Psoas muscle (tissue), 8 donors: ENCODE measurements at regions of chr11 and their contacts with region 1.

Region 1: DNA sequence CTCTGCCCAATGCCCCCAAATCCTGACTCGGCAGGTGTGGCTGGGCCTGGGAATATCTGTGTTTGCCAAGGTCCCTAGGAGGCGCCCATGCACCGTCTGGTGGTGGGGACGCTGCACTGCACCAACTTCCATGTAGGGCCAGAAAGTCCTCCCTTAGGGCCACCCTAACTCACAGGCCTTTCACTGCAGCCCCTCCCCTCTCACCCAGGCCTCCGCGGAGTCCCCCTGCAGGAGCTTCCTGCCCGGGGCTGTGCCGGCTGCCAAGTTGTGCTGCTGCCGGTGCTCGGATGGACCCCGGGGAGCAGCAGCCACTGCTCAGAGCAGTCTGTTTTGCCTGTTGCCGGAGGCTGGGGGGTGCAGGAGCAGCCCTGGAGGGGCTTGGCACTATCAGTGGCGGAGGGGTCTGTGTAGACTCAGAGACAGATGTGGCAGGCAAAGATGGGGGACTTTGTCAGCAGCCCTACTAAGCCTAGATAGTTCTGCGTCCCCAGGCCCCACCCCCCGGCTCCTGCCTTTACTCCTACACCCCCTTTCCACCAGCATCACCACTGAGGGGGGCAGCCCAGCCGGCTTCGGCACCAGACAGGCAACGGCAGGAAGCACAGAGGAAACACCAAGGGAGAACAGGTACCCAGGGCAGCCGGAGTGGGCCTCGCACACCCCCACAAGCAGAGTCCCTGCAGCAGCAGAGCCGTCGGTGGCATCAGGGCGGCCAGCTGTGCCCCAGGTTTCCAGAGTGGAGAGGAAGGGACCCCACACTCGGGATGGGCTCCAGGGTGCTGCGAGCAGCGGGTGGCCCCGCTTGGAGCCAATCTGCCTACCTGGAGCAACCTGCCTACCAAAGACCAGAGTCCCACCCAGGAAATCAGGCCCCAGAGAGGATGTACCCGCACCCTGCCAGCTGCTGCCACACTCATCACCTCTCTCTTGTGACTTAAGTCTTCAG is 124.3 kb downstream of the TRIM29 start:
- DNase-seq: peak in 1 of 2 donors; percentile 32
- ATAC-seq: peak; percentile 58 to 72 (median 69)
- H3K4me3 ChIP-seq: no peak overlapping the region
- H3K27ac ChIP-seq: no peak overlapping the region
- H3K4me1 ChIP-seq: no peaks in the 10 kb centered on the region
- H3K27me3 ChIP-seq: peaks cover 0 to 67% (median 2%) of the 10 kb centered on the region in 3 donors
- CTCF ChIP-seq: peak; percentile 60

Region 2: DNA sequence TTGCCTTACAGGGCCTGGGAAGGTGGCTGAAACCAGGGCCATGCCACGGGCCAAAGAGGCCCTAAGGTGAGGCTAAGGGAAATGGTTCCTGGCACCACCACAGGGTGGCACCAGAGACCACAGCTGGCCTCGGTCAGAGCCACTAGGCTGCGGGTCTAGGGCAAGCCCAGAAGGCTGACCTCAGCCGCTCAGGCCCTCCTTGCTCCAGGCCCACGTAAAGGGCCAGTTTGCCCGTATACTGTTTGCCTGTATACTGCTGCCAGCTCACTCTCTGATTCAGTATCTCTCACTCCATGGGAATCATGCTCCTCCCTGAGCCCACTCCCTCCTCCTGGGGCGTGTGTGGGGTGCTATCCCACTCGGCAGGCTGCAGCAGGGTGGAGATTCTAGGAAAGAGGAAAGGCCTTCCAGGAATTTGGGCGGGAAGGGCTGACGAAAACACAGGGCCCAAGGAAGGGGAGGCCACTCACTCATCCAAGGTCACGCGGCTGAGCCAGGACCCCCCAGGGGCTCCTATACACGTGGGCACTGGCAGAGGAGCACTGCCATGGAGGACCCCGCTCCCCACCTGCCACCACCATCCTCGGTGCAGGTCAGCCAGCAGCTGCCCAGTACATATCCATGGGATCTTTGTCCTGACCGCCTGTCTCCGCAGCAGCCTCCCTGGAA is 347.0 kb before region 1 on chr11:
- intact Hi-C with region 1: loop called in 1 of 2 experiments (anchors 2 kb)
- DNase-seq: peak; percentile 76 to 88
- ATAC-seq: peak; percentile 95 to 98 (median 96)
- H3K4me3 ChIP-seq: no peak overlapping the region
- H3K27ac ChIP-seq: no peak overlapping the region
- H3K4me1 ChIP-seq: peaks cover 5% of the 10 kb centered on the region
- H3K27me3 ChIP-seq: no peaks in the 10 kb centered on the region
- CTCF ChIP-seq: peak; percentile 96

Region 3: DNA sequence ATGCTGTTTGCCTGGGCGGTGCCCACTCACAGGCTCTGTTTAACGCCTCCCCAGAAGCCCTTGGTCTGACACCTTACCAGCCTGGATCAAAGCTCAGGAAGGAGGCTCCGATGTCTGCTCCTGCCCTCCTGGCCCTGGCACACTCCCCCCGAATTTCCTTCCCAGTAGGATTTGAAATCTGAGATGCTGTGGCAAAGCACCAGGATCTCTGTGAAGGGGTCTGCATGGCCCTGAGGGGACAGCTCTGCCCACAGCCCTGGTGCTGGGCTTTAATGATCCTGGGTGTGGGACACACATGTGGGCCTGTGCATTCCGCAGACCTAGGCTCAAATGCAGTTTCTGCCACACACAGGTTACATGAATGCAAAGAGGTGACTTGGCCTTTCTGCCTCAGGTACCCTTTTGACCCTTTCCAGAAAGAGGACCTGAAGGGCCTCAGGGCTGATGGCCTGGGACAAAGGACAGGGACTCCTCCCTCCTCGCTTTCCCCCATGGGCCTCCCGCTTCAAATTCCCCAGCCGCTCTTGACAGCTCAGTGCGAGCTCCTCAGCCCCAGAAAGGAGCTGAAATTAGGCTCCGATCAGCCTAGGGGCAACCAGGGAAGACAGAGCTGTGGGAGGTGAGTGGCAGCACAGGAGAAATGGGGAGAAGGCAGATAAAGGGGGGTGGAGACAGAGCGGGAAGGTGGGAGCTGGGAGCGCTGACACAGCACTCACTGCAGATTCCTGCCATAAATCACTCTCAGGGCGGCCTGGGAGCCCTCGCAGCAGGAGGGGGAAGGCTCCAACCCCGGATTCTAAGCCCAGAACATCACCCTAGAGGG is 83.0 kb after region 1 on chr11:
- intact Hi-C with region 1: no loop called
- DNase-seq: no peak
- ATAC-seq: no peak
- H3K4me3 ChIP-seq: no peak overlapping the region
- H3K27ac ChIP-seq: no peak overlapping the region
- H3K4me1 ChIP-seq: no peaks in the 10 kb centered on the region
- H3K27me3 ChIP-seq: no peaks in the 10 kb centered on the region
- CTCF ChIP-seq: no peak

Region 4: DNA sequence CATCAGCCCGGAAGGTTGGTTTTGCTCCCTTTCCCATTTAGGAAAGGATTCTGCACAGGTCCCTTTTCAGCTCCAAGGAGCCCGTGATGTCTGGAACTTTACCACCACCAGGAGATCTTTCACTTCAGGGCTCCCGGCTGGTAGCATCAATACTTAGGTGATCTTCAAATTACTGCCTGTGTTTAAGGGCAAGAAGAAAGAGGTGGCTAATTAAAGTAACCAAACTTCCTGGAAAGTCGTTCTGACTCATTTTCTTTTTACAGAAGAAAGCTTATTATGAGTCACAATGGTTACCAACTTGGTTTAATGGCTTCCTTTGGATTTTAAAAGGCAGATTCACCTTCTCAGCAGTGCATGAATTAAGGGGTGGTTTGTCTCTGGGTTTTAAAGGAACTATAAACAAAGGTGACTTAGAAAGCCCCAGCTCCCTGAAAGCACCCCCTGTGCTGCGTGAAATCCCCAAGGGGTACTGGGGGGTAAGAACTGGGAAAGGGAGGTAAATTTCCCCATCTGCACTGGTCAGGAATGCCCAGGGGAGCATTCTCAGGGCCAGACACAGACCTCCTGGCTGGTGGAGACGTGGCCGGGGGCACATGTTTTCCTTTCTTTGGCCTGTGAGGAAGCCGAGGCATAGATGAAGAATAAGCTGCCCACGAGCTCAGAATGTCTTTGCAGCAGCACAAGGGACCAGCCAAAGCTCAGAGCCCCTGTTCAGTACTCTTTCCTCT is 235.1 kb after region 1 on chr11:
- intact Hi-C with region 1: no loop called
- DNase-seq: no peak
- ATAC-seq: no peak
- H3K4me3 ChIP-seq: no peak overlapping the region
- H3K27ac ChIP-seq: no peak overlapping the region
- H3K4me1 ChIP-seq: no peaks in the 10 kb centered on the region
- H3K27me3 ChIP-seq: peaks cover 0 to 57% (median 4%) of the 10 kb centered on the region in 3 donors
- CTCF ChIP-seq: no peak